ENCODE measurements at regions of chr6 and their contacts with region 1.

Region 1: GRCh38 chr6:43253401-43253800 is 10.1 kb downstream of the TTBK1 start:
- DNase-seq: no peak
- H3K4me3 ChIP-seq: no peak overlapping the region
- H3K27ac ChIP-seq: no peak overlapping the region
- H3K4me1 ChIP-seq: no peaks in the 10 kb centered on the region
- H3K27me3 ChIP-seq: peaks cover 0 to 26% of the 10 kb centered on the region in 2 donors
- CTCF ChIP-seq: no peak
- POLR2A ChIP-seq: no peak

Region 2: DNA sequence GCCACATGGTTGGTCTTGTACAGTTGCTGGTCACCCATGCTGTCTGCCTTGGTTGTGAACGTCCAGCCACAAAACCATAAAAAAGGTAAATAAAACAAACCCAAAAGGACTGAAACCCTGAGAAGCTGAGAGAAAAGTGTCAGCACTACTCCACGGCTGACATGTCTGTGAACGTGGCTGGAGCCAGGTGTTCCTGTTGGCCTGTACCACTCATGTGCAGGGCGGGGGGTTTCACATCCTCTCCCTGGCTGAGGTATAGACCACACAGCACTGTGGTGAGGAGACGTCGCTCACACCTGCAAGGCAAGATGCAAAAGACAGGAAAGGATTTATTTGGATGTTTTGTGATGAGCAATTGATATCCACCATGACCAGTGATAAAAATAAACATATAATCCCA is 983.8 kb before region 1 on chr6:
- intact Hi-C with region 1: no loop called
- DNase-seq: no peak
- H3K4me3 ChIP-seq: no peak overlapping the region
- H3K27ac ChIP-seq: no peak overlapping the region
- H3K4me1 ChIP-seq: no peaks in the 10 kb centered on the region
- H3K27me3 ChIP-seq: no peaks in the 10 kb centered on the region
- CTCF ChIP-seq: no peak
- POLR2A ChIP-seq: no peak

Region 3: DNA sequence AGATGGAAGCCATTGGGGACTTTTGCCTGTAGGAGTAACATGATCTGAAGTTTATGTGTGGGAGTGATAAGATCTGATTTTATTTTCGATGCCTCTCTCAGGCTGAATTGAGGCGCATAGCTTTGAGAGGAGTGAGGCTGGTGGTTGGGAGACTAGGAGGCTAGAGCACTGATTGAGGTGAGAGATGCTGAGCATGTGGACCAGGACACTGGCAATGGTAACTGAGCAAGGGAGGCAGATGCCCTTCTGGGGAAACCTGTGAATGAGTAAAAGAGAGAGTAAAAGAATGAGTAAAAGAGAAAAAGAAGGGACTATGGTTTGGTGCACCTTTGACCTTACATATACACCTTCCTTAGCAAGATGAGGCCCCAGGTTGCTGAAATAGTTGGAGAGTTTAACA is 229.0 kb before region 1 on chr6:
- intact Hi-C with region 1: no loop called
- DNase-seq: no peak
- H3K4me3 ChIP-seq: no peak overlapping the region
- H3K27ac ChIP-seq: no peak overlapping the region
- H3K4me1 ChIP-seq: no peaks in the 10 kb centered on the region
- H3K27me3 ChIP-seq: no peaks in the 10 kb centered on the region
- CTCF ChIP-seq: no peak
- POLR2A ChIP-seq: no peak

Region 4: GRCh38 chr6:43093436-43094289 is 159.7 kb before region 1 on chr6:
- intact Hi-C with region 1: no loop called
- DNase-seq: peak in 1 of 2 donors; percentile 30
- H3K4me3 ChIP-seq: peak overlapping the region; percentile 34 to 61 (median 41)
- H3K27ac ChIP-seq: peak overlapping the region; percentile 64 to 92
- H3K4me1 ChIP-seq: peaks cover 20 to 47% of the 10 kb centered on the region in 2 donors
- H3K27me3 ChIP-seq: no peaks in the 10 kb centered on the region
- CTCF ChIP-seq: no peak
- POLR2A ChIP-seq: no peak

Region 5: GRCh38 chr6:43216200-43216599 is 37.2 kb before region 1 on chr6:
- intact Hi-C with region 1: loop called (anchors 1 kb)
- DNase-seq: no peak
- H3K4me3 ChIP-seq: no peak overlapping the region
- H3K27ac ChIP-seq: no peak overlapping the region
- H3K4me1 ChIP-seq: peaks cover 0 to 1% of the 10 kb centered on the region in 2 donors
- H3K27me3 ChIP-seq: no peaks in the 10 kb centered on the region
- CTCF ChIP-seq: no peak
- POLR2A ChIP-seq: no peak

Region 6: DNA sequence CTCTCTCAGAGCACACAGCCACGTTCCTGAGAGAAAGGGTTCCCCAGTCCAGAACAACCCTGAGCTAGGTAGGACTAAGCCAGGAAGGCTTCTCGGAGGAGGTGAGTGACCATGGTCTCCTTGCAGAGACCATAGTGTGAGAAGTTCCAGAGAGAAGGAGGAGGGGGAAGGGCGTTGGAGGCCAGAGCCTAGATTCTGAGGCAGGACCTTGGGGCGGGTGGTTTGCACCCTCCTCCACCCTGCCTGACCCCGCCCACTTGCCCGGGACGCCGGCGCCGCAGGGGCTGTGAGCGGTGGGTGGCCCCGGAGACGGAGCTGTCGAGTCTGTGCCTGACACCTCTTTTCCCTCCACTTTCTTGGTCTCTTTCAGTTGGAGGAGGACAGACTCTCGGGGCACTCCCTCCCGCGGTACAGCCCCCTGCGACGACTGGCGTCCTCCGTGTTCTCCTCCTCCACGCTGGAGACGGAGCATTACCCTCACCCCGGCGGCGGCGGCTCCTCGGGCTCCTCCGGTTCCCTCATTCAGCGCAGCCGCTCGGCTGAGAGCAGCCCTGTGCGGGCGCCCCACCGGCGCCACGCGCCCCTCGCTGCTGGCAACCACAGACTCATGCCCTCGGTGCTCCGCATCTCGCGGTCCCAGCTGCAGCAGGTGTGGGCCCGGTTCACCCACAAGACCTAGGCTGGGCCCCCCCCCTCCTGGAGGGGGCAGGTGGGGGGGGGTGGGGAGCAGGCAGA is 16.0 kb after region 1 on chr6:
- intact Hi-C with region 1: no loop called
- DNase-seq: no peak
- H3K4me3 ChIP-seq: peak overlapping the region; percentile 26 to 62 (median 37)
- H3K27ac ChIP-seq: peak overlapping the region in 1 of 2 donors; percentile 48
- H3K4me1 ChIP-seq: peaks cover 0 to 7% of the 10 kb centered on the region in 2 donors
- H3K27me3 ChIP-seq: no peaks in the 10 kb centered on the region
- CTCF ChIP-seq: no peak
- POLR2A ChIP-seq: no peak